Activated naive CD4-positive, alpha-beta T cell treated with anti-CD3 and anti-CD28 coated beads, Interleukin-2, amount 10 ng/mL, durations not matched to agents 7 days and 5 days (primary cell): ENCODE measurements at regions of chr12 and their contacts with region 1.

Region 1: DNA sequence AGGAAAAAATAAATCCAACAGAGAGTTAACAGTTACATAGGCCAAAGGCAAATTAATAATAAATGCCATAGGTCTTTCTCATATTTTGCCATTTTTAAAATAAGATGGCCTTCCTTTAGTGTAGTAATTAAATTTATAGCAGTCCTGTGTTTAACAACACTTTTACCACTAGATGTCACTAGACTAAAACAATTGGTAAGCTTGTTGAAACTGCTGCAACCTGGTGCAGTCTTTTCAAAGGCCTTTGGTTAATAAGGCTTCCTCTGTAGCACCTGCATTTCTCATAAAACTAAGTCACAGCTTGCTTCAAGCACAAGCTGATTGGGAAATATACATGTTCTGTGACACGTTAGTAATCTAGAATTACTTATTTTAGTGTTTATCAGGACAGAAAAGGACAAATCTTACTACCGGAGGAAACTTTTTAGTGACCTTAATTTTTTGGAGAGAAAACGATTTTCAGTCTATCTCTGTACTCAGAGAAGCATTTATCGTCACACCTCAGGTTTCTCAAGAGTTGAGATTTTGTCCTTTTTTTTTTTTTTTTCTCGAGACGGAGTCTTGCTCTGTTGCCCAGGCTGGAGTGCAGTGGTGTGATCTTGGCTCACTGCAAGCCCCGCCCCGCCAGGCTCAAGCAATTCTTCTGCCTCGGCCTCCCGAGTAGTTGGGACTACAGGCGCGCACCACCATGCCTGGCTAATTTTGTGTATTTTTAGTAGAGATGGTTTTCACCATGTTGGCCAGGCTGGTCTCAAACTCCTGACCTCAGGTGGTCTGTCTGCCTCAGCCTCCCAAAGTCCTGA is 20.0 kb downstream of the BORCS5 start:
- DNase-seq: peak; percentile 35
- H3K4me3 Mint-ChIP-seq: no peak overlapping the region
- H3K27ac Mint-ChIP-seq: peak overlapping the region; percentile 65
- H3K4me1 Mint-ChIP-seq: peaks cover 53% of the 10 kb centered on the region
- H3K27me3 Mint-ChIP-seq: no peaks in the 10 kb centered on the region

Region 2: DNA sequence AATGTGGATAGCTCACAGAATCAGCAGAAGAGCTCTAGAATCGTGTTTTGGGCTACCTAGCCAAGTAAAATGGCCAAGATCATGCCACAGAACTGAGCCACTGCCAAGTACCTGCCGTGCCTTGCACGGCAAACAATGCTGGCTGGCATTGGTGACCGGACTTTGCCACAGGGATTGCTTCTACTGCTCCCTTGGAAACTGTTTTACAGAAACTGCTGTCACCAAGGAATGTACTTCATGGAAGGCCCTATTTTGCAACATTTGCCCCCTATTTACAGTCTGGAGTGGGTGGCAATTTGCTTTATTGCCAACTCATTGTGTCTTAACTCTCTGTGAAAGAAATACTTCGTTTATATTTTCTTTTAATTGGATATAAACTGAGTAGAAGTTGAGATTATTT is 29.0 kb after region 1 on chr12:
- CTCF ChIA-PET with region 1: no interaction called
- DNase-seq: no peak
- H3K4me3 Mint-ChIP-seq: no peak overlapping the region
- H3K27ac Mint-ChIP-seq: no peak overlapping the region
- H3K4me1 Mint-ChIP-seq: peaks cover 30% of the 10 kb centered on the region
- H3K27me3 Mint-ChIP-seq: no peaks in the 10 kb centered on the region

Region 3: GRCh38 chr12:12467688-12468261 is 90.9 kb after region 1 on chr12:
- CTCF ChIA-PET with region 1: interaction called, 58 read pairs
- DNase-seq: peak; percentile 46
- H3K4me3 Mint-ChIP-seq: no peak overlapping the region
- H3K27ac Mint-ChIP-seq: peak overlapping the region; percentile 77
- H3K4me1 Mint-ChIP-seq: peaks cover 66% of the 10 kb centered on the region
- H3K27me3 Mint-ChIP-seq: no peaks in the 10 kb centered on the region

Region 4: DNA sequence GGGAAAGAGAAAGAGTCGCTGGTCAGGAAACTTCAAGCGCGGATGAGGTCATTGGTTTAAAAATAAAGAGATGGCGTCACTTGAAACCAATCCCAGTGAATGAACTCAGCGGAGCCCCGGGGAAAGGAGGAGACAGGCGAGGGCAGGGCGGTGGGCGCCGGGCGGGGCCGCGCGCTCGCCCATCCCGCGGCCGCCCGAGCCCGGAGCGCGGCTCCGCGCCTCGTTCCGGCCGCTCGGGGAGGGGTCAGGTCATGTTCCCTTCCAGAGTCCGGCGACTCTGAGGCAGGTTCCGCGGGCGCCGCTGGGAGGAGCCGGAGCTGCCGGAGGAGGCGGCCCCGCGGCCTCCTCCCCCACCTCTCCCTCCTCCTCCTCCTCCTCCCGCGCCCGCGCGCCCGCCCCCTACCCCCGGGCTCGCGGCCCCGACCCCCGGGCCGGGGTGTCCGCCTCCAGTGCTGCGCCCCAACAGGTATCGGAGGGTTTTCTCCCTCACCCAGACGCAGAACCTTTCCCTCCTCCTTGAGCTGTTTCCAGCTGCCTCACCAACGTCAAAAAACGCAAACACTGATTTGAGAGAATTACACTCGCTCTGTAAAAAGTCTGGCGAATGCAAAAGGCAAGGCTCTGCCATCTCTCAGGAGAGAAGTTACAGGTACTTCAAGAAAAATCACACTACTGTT is 185.9 kb after region 1 on chr12 and contains the start of gene DUSP16:
- CTCF ChIA-PET with region 1: interaction called, 45 read pairs
- DNase-seq: peak; percentile 88
- H3K4me3 Mint-ChIP-seq: peak within 1 kb of the TSS; percentile 83
- H3K27ac Mint-ChIP-seq: peak within 1 kb of the TSS; percentile 96
- H3K4me1 Mint-ChIP-seq: peaks cover 46% of the 10 kb centered on the region
- H3K27me3 Mint-ChIP-seq: peaks cover 3% of the 10 kb centered on the region

Region 5: GRCh38 chr12:12654691-12655460 is 278.0 kb after region 1 on chr12:
- CTCF ChIA-PET with region 1: interaction called, 24 read pairs
- DNase-seq: no peak
- H3K4me3 Mint-ChIP-seq: no peak overlapping the region
- H3K27ac Mint-ChIP-seq: no peak overlapping the region
- H3K4me1 Mint-ChIP-seq: peaks cover 12% of the 10 kb centered on the region
- H3K27me3 Mint-ChIP-seq: no peaks in the 10 kb centered on the region

Region 6: DNA sequence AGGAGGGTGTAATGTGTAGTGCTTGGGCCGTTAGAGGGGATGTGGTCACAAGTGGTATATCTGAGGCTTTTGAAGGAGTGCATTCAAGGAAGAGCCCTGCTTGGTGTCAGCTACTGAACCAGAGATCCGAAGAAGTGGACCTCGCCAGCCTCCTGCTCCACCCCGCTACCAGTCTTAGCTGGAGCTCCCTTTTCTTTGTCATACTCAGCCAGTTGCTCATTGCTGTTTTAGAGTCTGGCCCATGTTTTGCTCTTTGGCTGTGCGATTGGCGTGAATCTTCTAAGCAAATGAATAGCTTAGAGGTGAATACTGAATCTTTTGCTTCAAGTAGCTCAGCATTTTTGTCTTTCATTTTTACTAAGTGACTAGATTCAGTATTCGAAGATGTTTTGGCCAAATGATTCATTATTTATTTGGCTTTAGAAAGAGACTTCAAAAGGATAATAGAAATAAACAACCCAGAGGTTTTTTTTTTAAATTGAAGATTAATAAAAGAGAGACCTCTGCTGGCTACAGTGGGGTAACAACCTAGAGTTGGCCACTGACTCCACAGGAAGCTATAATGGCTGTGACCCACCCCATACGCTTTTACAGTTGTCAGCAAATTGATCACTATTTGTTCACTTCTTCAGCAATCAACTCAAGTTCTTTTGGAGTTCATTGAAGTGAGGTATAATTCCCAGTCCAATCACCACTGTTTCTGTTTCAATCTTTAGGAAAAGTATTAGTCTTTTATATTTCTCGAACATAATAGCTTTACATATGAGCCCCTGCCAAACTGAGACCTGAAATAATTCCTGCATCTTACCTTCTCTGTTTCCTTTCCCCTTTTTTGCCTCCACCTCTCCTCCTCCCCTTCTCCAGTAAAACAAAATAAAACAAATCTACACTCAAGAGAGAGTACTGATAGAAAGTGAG is 360.2 kb after region 1 on chr12:
- CTCF ChIA-PET with region 1: interaction called, 14 read pairs
- DNase-seq: peak; percentile 72
- H3K4me3 Mint-ChIP-seq: peak overlapping the region; percentile 64
- H3K27ac Mint-ChIP-seq: peak overlapping the region; percentile 97
- H3K4me1 Mint-ChIP-seq: peaks cover 73% of the 10 kb centered on the region
- H3K27me3 Mint-ChIP-seq: no peaks in the 10 kb centered on the region